MCF 10A (cell line): ENCODE measurements at regions of chr19 and their contacts with region 1.

Region 1: DNA sequence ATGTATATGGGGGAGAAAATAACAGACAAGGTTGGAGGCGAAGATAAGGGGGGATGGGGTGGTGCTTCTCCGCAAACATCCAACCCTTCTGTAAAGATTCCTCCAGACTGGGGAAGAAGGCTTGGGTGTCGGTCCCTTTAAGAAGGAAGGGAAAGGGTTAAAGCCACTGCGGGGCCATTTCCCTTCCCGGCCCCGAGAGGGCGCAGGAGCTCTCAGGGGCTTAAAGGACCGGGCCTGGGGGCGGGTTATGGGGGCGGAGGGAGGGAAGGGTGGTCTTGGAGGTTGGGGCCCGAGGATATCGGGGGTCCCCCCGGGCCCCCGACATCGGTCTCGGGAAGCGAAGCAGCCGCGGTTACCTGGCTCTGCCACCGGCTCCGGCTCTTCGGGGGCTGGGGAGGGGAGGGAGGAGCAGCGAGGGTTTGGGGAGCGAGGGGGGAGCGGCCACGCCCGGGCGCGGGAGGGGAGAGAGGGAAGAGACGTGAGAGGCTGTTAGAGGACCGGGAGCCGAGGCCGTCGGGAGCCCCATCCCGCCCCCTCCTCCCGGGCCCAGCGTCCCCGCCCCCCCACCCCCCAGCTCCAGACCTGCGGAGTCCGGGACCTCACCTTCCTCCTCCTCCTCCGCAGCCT is 2.8 kb downstream of the TNNT1 start:
- DNase-seq: peak; percentile 51
- H3K4me3 Mint-ChIP-seq: peak overlapping the region; percentile 69
- H3K27ac Mint-ChIP-seq: no peak overlapping the region
- H3K4me1 Mint-ChIP-seq: peaks cover 14% of the 10 kb centered on the region
- H3K27me3 Mint-ChIP-seq: peaks cover 24% of the 10 kb centered on the region
- CTCF ChIP-seq: peak; percentile 81

Region 2: DNA sequence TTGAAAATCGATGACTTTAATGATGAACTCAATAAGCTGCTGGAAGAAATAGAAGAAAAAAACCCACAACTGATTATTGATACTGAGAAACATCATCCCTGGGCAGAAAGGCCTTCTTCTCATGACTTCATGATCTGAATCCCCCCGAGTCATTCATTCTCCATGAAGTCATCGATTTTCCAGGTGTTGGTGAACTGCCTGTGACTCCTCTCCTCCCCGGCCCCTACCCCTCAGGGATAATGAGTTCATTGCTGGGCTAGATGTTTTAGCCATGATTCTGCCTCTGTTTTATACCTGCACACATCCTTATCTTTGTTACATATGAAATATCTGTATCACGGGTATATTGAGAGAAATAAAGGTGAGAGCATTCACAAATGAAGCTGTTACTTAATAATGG is 145.4 kb before region 1 on chr19:
- CTCF ChIA-PET with region 1: no interaction called
- POLR2A ChIA-PET with region 1: no interaction called
- intact Hi-C with region 1: no loop called
- DNase-seq: no peak
- H3K4me3 Mint-ChIP-seq: no peak overlapping the region
- H3K27ac Mint-ChIP-seq: no peak overlapping the region
- H3K4me1 Mint-ChIP-seq: peaks cover 2% of the 10 kb centered on the region
- H3K27me3 Mint-ChIP-seq: peaks cover 42% of the 10 kb centered on the region
- CTCF ChIP-seq: no peak

Region 3: GRCh38 chr19:55160128-55160985 is 14.2 kb after region 1 on chr19:
- CTCF ChIA-PET with region 1: interaction called, 25 read pairs
- POLR2A ChIA-PET with region 1: interaction called, 4 read pairs
- intact Hi-C with region 1: no loop called
- DNase-seq: peak; percentile 94
- H3K4me3 Mint-ChIP-seq: peak overlapping the region; percentile 22
- H3K27ac Mint-ChIP-seq: no peak overlapping the region
- H3K4me1 Mint-ChIP-seq: peaks cover 27% of the 10 kb centered on the region
- H3K27me3 Mint-ChIP-seq: no peaks in the 10 kb centered on the region
- CTCF ChIP-seq: peak; percentile 90

Region 4: GRCh38 chr19:55166530-55167268 is 20.5 kb after region 1 on chr19 and contains the start of gene DNAAF3:
- CTCF ChIA-PET with region 1: interaction called, 7 read pairs
- POLR2A ChIA-PET with region 1: interaction called, 5 read pairs
- intact Hi-C with region 1: loop called (anchors 2 kb)
- DNase-seq: peak; percentile 100
- H3K4me3 Mint-ChIP-seq: peak within 1 kb of the TSS; percentile 84
- H3K27ac Mint-ChIP-seq: peak within 1 kb of the TSS; percentile 93
- H3K4me1 Mint-ChIP-seq: peaks cover 10% of the 10 kb centered on the region
- H3K27me3 Mint-ChIP-seq: no peaks in the 10 kb centered on the region
- CTCF ChIP-seq: no peak
- total RNA-seq, gene DNAAF3: 3.9 and 4.9 TPM in 2 replicates

Region 5: GRCh38 chr19:55216461-55217198 is 70.4 kb after region 1 on chr19:
- CTCF ChIA-PET with region 1: no interaction called
- POLR2A ChIA-PET with region 1: interaction called, 3 read pairs
- intact Hi-C with region 1: loop called (anchors 2 kb)
- DNase-seq: peak; percentile 99
- H3K4me3 Mint-ChIP-seq: peak overlapping the region; percentile 78
- H3K27ac Mint-ChIP-seq: peak overlapping the region; percentile 64
- H3K4me1 Mint-ChIP-seq: peaks cover 16% of the 10 kb centered on the region
- H3K27me3 Mint-ChIP-seq: no peaks in the 10 kb centered on the region
- CTCF ChIP-seq: no peak

Region 6: GRCh38 chr19:55289117-55289796 is 143.1 kb after region 1 on chr19:
- CTCF ChIA-PET with region 1: interaction called, 20 read pairs
- POLR2A ChIA-PET with region 1: no interaction called
- intact Hi-C with region 1: loop called (anchors 2 kb)
- DNase-seq: no peak
- H3K4me3 Mint-ChIP-seq: no peak overlapping the region
- H3K27ac Mint-ChIP-seq: no peak overlapping the region
- H3K4me1 Mint-ChIP-seq: peaks cover 5% of the 10 kb centered on the region
- H3K27me3 Mint-ChIP-seq: no peaks in the 10 kb centered on the region
- CTCF ChIP-seq: no peak

Region 7: DNA sequence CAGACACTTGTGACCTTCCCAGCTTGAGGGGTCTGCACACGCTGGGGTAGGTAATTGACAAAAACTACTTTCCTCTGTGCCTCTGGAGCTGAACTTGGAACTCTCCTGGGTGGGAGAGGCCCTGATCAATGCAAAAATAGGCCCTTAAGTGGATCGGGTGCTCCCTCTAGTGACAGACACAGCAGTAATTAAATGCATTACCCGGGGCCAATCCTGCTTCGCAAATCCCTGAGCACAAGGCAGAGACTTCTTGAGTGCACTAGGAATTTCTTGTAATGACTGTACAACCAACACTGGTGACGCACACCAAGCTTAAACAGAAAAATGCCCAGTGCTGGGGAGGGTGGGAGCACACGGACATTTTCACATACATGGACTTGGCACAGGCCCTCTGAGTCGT is 272.0 kb after region 1 on chr19:
- CTCF ChIA-PET with region 1: interaction called, 27 read pairs
- POLR2A ChIA-PET with region 1: no interaction called
- intact Hi-C with region 1: loop called (anchors 1 kb)
- DNase-seq: peak; percentile 86
- H3K4me3 Mint-ChIP-seq: no peak overlapping the region
- H3K27ac Mint-ChIP-seq: no peak overlapping the region
- H3K4me1 Mint-ChIP-seq: no peaks in the 10 kb centered on the region
- H3K27me3 Mint-ChIP-seq: no peaks in the 10 kb centered on the region
- CTCF ChIP-seq: peak; percentile 86

Region 8: GRCh38 chr19:55452749-55453346 is 306.7 kb after region 1 on chr19:
- CTCF ChIA-PET with region 1: interaction called, 8 read pairs
- POLR2A ChIA-PET with region 1: no interaction called
- intact Hi-C with region 1: loop called (anchors 1 kb)
- DNase-seq: peak; percentile 71
- H3K4me3 Mint-ChIP-seq: peak overlapping the region; percentile 4
- H3K27ac Mint-ChIP-seq: no peak overlapping the region
- H3K4me1 Mint-ChIP-seq: no peaks in the 10 kb centered on the region
- H3K27me3 Mint-ChIP-seq: peaks cover 12% of the 10 kb centered on the region
- CTCF ChIP-seq: peak; percentile 8